GM12878 (cell line): ENCODE measurements at regions of chr4 and their contacts with region 1.

Region 1: DNA sequence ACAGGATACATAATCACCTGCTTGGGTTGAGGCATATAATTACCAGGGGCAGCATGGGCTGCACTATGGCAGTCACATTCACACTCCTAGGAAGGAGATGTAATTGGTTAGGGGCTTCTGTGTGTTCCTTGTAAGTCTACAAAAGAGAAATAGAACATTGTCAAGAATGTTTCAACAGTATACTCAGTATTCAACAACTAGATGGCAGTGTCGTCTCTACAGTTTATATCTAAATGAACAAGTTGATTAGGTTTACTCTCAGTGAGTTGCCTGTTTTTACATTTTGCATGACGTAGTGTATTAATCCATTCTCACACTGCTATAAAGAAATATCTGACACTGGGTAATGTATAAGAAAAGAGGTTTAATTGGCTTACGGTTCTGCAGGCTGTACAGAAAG is 50.5 kb upstream of the RAB33B start:
- DNase-seq: no peak
- ATAC-seq: peak; percentile 54
- H3K4me3 ChIP-seq: no peak overlapping the region
- H3K27ac ChIP-seq: no peak overlapping the region
- H3K4me1 ChIP-seq: no peaks in the 10 kb centered on the region
- H3K27me3 ChIP-seq: no peaks in the 10 kb centered on the region
- CTCF ChIP-seq: no peak; a peak in 1 of 6 replicates
- EP300 ChIP-seq: no peak
- POLR2A ChIP-seq: no peak
- RAD21 ChIP-seq: no peak

Region 2: DNA sequence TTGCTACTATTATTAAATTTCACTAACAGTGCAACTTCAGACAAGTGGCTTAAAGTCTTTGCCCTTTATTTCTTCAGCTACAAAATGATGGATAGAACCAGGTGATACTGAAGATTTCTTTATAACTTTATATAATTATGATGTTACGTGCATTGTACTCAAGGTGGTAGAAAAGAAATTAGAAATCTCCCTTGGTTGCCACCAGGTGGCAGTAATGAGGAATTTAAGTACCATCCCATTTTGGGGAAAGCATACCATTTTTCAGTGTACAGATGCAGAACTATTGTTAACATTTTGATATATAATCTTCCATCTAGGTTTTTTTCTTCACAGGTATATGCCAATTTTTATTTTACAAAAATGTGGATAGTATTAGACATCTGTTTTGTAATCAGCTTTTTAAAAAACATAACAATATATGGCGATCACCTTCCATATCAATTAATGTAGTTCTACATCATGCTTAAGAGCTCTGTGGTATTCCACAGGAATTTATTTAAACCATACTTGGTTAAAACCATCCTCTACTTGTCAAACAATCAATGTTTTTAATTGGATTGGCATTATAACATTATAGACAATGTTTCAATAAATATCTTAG is 12.7 kb after region 1 on chr4:
- CTCF ChIA-PET with region 1: interaction called, 15 read pairs
- POLR2A ChIA-PET with region 1: no interaction called
- RAD21 ChIA-PET with region 1: no interaction called
- SMC1A ChIA-PET with region 1: no interaction called
- in situ Hi-C with region 1: no loop called
- intact Hi-C with region 1: no loop called
- DNase-seq: no peak
- ATAC-seq: peak; percentile 68
- H3K4me3 ChIP-seq: no peak overlapping the region
- H3K27ac ChIP-seq: no peak overlapping the region
- H3K4me1 ChIP-seq: no peaks in the 10 kb centered on the region
- H3K27me3 ChIP-seq: no peaks in the 10 kb centered on the region
- CTCF ChIP-seq: peak; percentile 44 to 54 (median 53); a peak in 5 of 6 replicates
- EP300 ChIP-seq: no peak
- POLR2A ChIP-seq: no peak
- RAD21 ChIP-seq: peak; percentile 57